Stomach (tissue), 19 donors: ENCODE measurements at regions of chr12 and their contacts with region 1.

Region 1: GRCh38 chr12:117836999-117837736 is 131.6 kb downstream of the KSR2 start:
- DNase-seq: peak; percentile 79 to 91
- H3K4me3 ChIP-seq: no peak overlapping the region
- H3K27ac ChIP-seq: no peak overlapping the region
- H3K4me1 ChIP-seq: peaks cover 0 to 8% (median 2%) of the 10 kb centered on the region in 4 donors
- H3K27me3 ChIP-seq: peaks cover 0 to 52% (median 8%) of the 10 kb centered on the region in 3 donors
- CTCF ChIP-seq: peak in 6 of 7 experiments; percentile 78 to 98 (median 86)
- EP300 ChIP-seq: no peak
- POLR2A ChIP-seq: no peak

Region 2: DNA sequence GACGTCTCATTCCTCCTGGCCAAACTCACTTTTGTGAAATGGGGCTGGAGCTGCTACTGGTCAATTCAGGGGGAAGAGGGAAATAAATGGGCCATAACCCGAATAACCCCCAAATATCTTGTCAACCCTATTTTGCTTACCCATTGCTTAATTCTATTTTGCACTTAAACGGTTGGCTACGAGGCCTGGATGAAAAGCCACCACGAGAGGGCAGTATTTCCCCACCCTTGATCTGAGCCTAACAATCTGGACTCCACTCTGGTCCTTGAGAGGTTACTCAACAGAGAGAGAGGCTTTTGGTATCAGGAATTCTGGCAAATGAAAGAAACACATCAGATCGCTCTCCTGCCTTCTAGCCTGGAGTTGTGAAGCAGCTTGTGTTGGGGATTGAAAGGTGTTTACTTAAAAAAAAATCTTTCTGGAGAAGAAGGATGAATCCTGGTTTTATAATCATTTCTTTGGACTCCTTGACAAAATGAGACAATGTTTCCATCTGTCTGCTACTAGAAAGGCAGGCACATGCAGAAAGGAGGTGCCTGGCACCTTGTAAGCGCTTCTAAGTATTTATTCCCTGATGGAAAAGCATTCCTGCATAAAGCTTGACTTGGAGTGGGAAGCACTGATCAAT is 624.5 kb before region 1 on chr12:
- intact Hi-C with region 1: loop called (anchors 5 kb)
- DNase-seq: peak; percentile 74 to 90
- H3K4me3 ChIP-seq: no peak overlapping the region
- H3K27ac ChIP-seq: no peak overlapping the region
- H3K4me1 ChIP-seq: no peaks in the 10 kb centered on the region
- H3K27me3 ChIP-seq: peaks cover 0 to 50% (median 5%) of the 10 kb centered on the region in 3 donors
- CTCF ChIP-seq: peak in 5 of 7 experiments; percentile 72 to 87 (median 80)
- EP300 ChIP-seq: no peak
- POLR2A ChIP-seq: no peak

Region 3: DNA sequence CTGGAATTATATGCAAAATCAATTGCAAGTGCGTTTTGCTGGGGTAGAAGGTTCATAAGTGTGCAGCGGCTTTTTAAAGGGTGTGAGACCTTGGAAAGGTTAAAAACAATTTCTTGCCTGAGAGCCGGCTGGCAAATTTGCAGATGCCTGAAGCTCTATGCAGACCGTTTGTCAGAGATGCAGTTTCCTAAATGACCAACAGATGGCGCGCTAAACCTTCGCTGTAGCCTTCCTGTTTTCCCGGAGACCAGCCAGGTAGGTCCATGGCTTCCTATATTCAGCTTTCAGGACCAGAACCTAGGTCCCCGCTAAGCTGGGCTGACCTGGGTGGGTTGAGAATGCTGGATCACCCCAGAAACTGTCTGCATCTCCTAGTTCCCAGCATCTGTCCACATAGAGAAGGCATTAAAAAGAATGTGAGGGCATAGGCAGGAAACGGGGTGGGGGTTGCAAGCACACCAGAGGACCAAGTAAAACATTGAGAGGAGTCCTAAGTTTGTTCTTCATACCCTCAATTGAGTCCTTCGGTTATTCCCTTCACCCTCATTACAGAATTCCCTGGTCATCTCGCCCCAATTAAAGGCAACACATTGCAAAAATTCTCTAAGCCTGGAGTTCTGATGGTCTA is 470.0 kb before region 1 on chr12:
- intact Hi-C with region 1: loop called (anchors 5 kb)
- DNase-seq: peak; percentile 84 to 91
- H3K4me3 ChIP-seq: no peak overlapping the region
- H3K27ac ChIP-seq: no peak overlapping the region
- H3K4me1 ChIP-seq: no peaks in the 10 kb centered on the region
- H3K27me3 ChIP-seq: peaks cover 3 to 48% (median 29%) of the 10 kb centered on the region in 3 donors
- CTCF ChIP-seq: peak in 5 of 7 experiments; percentile 46 to 91 (median 84)
- EP300 ChIP-seq: no peak
- POLR2A ChIP-seq: no peak